ENCODE measurements at regions of chr21 and their contacts with region 1.

Region 1: GRCh38 chr21:21101911-21102310 is 103.7 kb downstream of the NCAM2 start:
- DNase-seq: peak; percentile 3
- ATAC-seq: peak; percentile 54; the same call in 2 of the 3 replicates
- H3K4me3 ChIP-seq: no peak overlapping the region
- H3K27ac ChIP-seq: no peak overlapping the region
- H3K4me1 ChIP-seq: no peaks in the 10 kb centered on the region
- H3K27me3 ChIP-seq: no peaks in the 10 kb centered on the region
- CTCF ChIP-seq: peak; percentile 38; the same call in 1 of the 2 replicates
- EP300 ChIP-seq: no peak
- POLR2A ChIP-seq: no peak
- RAD21 ChIP-seq: no peak

Region 2: DNA sequence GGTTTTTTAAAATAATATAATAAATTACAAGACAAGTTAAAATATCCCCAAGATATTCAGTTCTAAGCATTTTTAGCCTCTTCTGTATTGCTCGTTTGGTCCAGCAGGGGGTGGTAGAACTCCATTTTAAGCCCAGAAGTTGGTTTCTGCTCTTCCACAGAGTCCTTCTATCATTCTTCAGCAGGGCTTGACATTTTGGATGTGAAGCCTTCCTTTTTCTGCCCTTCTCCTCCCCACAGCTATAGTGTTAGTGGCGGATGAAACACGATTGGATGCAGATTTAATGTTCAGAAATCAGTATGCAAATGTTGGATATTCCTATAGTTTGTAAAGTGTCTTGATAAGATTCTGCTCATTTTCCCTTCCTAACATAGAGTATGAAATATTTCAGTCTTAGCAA is 102.3 kb before region 1 on chr21:
- CTCF ChIA-PET with region 1: interaction called, 3 read pairs
- POLR2A ChIA-PET with region 1: no interaction called
- in situ Hi-C with region 1: no loop called
- intact Hi-C with region 1: loop called (anchors 2 kb)
- DNase-seq: peak; percentile 9
- ATAC-seq: 0 out of 3 replicates have a peak, but pooled peaks have one; percentile 16
- H3K4me3 ChIP-seq: no peak overlapping the region
- H3K27ac ChIP-seq: no peak overlapping the region
- H3K4me1 ChIP-seq: no peaks in the 10 kb centered on the region
- H3K27me3 ChIP-seq: peaks cover 0 to 6% of the 10 kb centered on the region in 2 experiments; a peak in 1 of 5 replicates
- CTCF ChIP-seq: peak; percentile 63
- EP300 ChIP-seq: no peak
- POLR2A ChIP-seq: no peak
- RAD21 ChIP-seq: no peak

Region 3: GRCh38 chr21:21084179-21084578 is 17.7 kb before region 1 on chr21:
- CTCF ChIA-PET with region 1: no interaction called
- POLR2A ChIA-PET with region 1: no interaction called
- in situ Hi-C with region 1: no loop called
- intact Hi-C with region 1: no loop called
- DNase-seq: no peak
- ATAC-seq: no peak
- H3K4me3 ChIP-seq: no peak overlapping the region
- H3K27ac ChIP-seq: no peak overlapping the region
- H3K4me1 ChIP-seq: no peaks in the 10 kb centered on the region
- H3K27me3 ChIP-seq: no peaks in the 10 kb centered on the region
- CTCF ChIP-seq: no peak
- EP300 ChIP-seq: no peak
- POLR2A ChIP-seq: no peak
- RAD21 ChIP-seq: no peak

Region 4: DNA sequence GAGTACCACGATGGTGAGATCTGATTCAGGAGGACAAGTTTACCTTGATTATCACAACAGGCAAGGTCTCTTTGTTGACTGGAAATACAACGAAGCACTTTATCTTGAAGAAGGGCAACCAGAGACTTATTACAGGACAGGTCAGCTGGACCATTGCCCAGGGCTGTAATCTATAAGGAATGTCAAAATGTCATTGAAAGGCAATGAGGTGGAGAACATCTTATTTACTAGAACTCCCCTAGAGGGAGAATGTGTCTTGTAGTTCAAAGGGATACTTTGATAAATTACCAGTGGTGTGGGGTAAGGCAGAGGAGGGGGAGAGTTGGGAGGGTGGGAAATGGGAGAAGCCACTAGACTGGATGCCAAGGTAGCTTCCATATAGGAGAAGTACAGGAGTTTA is 108.6 kb after region 1 on chr21:
- CTCF ChIA-PET with region 1: no interaction called
- POLR2A ChIA-PET with region 1: no interaction called
- in situ Hi-C with region 1: no loop called
- intact Hi-C with region 1: no loop called
- DNase-seq: no peak
- ATAC-seq: no peak
- H3K4me3 ChIP-seq: no peak overlapping the region
- H3K27ac ChIP-seq: no peak overlapping the region
- H3K4me1 ChIP-seq: no peaks in the 10 kb centered on the region
- H3K27me3 ChIP-seq: no peaks in the 10 kb centered on the region
- CTCF ChIP-seq: no peak
- EP300 ChIP-seq: no peak
- POLR2A ChIP-seq: no peak
- RAD21 ChIP-seq: no peak